Naive thymus-derived CD4-positive, alpha-beta T cell (primary cell): ENCODE measurements at regions of chr2 and their contacts with region 1.

Region 1: DNA sequence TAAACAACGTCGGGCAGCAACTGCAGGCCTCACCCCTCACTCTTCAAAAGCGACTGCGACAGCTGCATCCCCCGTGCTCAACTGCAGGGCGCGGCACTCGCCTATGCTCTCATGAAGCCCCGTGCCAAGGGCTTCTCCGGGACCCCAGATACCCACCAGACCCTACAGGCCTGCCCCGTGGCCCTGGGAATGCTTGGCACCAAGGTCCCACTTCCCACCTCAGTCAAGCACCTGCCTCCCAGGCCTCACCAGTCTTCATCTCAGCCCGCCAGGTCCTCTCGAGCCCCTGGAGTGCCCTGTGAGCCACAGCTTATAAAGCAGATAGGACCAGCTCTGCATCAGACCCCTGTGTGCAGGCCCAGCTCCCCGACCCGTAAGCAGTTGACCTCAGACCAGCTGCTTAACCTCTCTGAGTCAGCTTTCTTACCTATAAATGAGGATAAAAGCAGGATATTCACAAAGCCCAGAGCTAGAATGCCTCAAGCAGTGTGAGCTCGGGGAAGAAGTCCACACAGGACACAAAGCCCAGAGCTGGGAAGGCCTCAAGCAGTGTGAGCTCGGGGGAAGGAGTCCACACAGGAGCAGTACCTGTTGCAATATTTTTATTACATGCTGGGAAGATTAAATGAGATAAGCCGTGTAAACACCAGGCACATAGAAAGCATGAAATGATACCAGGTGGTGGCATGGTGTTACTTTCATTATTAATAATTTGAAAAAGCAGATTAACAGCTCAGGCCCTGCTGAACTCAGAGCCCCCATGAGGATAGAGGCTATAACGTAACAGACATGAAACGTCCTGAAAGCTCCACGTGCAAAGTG is 96.9 kb downstream of the HDAC4 start:
- DNase-seq: no peak
- ATAC-seq: no peak
- H3K4me3 ChIP-seq: no peak overlapping the region
- H3K4me3 Mint-ChIP-seq: peak overlapping the region in 6 of 10 donors; percentile 24 to 62 (median 55)
- H3K27ac ChIP-seq: no peak overlapping the region
- H3K27ac Mint-ChIP-seq: peak overlapping the region in 8 of 9 donors; percentile 51 to 94 (median 78)
- H3K4me1 ChIP-seq: peaks cover 17 to 22% of the 10 kb centered on the region in 2 donors
- H3K4me1 Mint-ChIP-seq: peaks cover 6 to 57% (median 48%) of the 10 kb centered on the region in 7 donors
- H3K27me3 ChIP-seq: no peaks in the 10 kb centered on the region
- H3K27me3 Mint-ChIP-seq: no peaks in the 10 kb centered on the region

Region 2: DNA sequence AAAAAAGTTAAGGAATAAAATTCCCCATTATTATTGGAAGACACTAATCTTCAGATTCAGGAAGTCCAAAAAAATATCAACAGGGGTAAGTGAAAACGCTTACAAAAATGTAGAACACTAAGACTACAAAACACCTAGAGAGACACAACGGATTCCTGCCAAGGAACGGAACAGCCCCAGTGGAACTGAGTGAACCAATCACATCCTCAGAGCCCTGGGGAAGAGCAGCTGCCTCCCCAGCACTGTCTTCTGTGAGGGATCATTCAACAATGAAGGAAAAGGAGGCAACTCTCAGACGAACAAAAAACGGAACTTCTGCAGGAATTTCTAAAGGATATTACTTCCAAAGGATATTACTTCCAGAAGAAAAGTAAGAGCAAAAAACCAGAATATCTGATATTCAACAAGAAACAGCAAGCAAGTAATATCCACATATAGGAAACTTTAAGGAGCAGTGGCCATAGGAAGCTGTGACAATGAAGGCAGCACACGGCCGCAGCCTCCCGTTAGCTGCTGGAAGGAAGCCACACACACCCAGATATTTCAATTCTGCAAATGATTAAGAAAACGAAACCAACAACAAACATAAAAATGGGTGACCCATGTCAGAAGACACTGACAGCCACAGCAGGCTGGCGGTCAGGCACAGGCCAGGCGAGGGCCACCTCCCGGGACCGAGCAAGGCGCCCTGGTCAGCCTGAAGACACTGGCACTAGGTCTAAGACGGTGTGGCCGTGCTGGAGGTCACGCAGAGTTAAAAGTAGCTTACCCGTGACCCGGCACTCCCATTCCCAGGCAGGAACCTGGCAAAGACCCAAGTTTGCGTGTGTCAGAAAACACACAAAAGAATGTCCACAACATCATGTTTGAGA is 15.1 kb after region 1 on chr2:
- CTCF ChIA-PET with region 1: interaction called, 3 read pairs
- POLR2A ChIA-PET with region 1: interaction called, 80 read pairs
- intact Hi-C with region 1: no loop called
- DNase-seq: peak in 4 of 9 donors; percentile 6 to 31 (median 28)
- ATAC-seq: peak; percentile 5
- H3K4me3 ChIP-seq: no peak overlapping the region
- H3K4me3 Mint-ChIP-seq: peak overlapping the region; percentile 78 to 90 (median 88)
- H3K27ac ChIP-seq: peak overlapping the region; percentile 64
- H3K27ac Mint-ChIP-seq: peak overlapping the region; percentile 93 to 100 (median 98)
- H3K4me1 ChIP-seq: peaks cover 31 to 41% of the 10 kb centered on the region in 2 donors
- H3K4me1 Mint-ChIP-seq: peaks cover 34 to 91% (median 78%) of the 10 kb centered on the region in 7 donors
- H3K27me3 ChIP-seq: no peaks in the 10 kb centered on the region
- H3K27me3 Mint-ChIP-seq: no peaks in the 10 kb centered on the region

Region 3: GRCh38 chr2:239457586-239458445 is 153.9 kb after region 1 on chr2:
- CTCF ChIA-PET with region 1: no interaction called
- POLR2A ChIA-PET with region 1: no interaction called
- intact Hi-C with region 1: no loop called
- DNase-seq: no peak
- ATAC-seq: no peak
- H3K4me3 ChIP-seq: no peak overlapping the region
- H3K4me3 Mint-ChIP-seq: no peak overlapping the region
- H3K27ac ChIP-seq: no peak overlapping the region
- H3K27ac Mint-ChIP-seq: no peak overlapping the region
- H3K4me1 ChIP-seq: no peaks in the 10 kb centered on the region
- H3K4me1 Mint-ChIP-seq: peaks cover 0 to 2% (median 0%) of the 10 kb centered on the region in 7 donors
- H3K27me3 ChIP-seq: no peaks in the 10 kb centered on the region
- H3K27me3 Mint-ChIP-seq: peaks cover 3 to 14% (median 11%) of the 10 kb centered on the region in 5 donors